HepG2 (cell line): ENCODE measurements at regions of chr4 and their contacts with region 1.

Region 1: GRCh38 chr4:102826890-102827673 is at the start of gene UBE2D3:
- DNase-seq: peak; percentile 81
- ATAC-seq: peak; percentile 64
- H3K4me3 ChIP-seq: peak within 1 kb of the TSS; percentile 92 to 97 (median 95)
- H3K27ac ChIP-seq: peak within 1 kb of the TSS; percentile 97
- H3K4me1 ChIP-seq: peaks cover 42% of the 10 kb centered on the region
- H3K27me3 ChIP-seq: peaks cover 0 to 2% of the 10 kb centered on the region in 2 experiments; a peak in 1 of 5 replicates
- CTCF ChIP-seq: peak; percentile 49
- EP300 ChIP-seq: no peak
- POLR2A ChIP-seq: peak; percentile 60 to 79; a peak in 2 of 4 replicates
- RAD21 ChIP-seq: peak; percentile 58
- total RNA-seq, gene UBE2D3: 224 and 265 TPM in 2 replicates

Region 2: DNA sequence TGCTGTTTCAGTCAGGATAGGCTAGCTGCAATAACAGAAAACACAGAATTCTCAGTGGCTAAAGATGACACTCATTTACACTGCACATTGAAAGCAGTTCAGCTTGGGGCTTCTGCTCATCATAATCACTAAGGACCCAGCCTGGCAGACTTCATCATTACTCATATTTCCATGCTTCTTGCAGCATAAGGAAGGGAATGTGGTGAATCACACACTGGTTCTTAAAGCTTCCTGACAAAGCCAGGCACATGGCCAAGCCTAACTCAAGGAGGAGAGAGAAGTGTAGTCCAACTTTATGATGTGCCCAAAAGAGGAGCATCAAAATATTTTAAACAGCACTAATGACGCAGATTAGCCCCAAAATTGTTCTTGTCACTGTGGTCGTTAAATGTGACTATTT is 850.0 kb before region 1 on chr4:
- CTCF ChIA-PET with region 1: no interaction called
- POLR2A ChIA-PET with region 1: no interaction called
- in situ Hi-C with region 1: no loop called
- intact Hi-C with region 1: no loop called
- DNase-seq: no peak
- ATAC-seq: no peak
- H3K4me3 ChIP-seq: no peak overlapping the region
- H3K27ac ChIP-seq: no peak overlapping the region
- H3K4me1 ChIP-seq: no peaks in the 10 kb centered on the region
- H3K27me3 ChIP-seq: no peaks in the 10 kb centered on the region
- CTCF ChIP-seq: no peak
- EP300 ChIP-seq: no peak
- POLR2A ChIP-seq: no peak
- RAD21 ChIP-seq: no peak

Region 3: DNA sequence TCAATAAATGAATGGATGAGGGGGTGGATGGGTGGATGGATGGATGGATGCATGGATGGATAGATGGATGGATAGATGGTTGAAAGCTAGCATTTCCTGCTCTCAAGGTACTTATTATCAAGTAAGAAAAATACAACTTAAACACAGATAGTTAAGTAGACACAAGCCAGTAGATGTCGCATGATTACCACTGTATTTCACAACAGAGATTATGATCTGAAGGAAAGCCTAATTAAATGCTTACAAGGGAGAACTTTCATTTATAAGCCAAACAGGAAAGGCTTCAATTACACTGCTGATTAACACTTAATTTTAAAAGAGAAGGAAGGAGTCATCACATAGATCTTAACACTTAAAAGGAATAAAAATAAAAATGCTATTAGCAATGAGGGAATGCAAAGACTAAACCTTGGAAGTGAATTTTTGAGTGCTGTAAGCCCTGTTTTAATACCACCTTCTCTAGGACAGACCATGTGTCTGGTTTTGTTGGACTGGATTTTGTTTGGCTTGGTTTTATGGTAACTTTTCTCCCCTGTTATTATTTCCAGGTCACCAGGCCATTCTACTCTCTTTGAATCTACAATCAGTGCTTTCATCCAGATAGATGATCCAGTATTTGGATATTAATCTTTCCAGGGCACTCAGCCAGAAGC is 406.4 kb before region 1 on chr4:
- CTCF ChIA-PET with region 1: no interaction called
- POLR2A ChIA-PET with region 1: no interaction called
- in situ Hi-C with region 1: no loop called
- intact Hi-C with region 1: no loop called
- DNase-seq: peak; percentile 7
- ATAC-seq: no peak
- H3K4me3 ChIP-seq: no peak overlapping the region
- H3K27ac ChIP-seq: no peak overlapping the region
- H3K4me1 ChIP-seq: no peaks in the 10 kb centered on the region
- H3K27me3 ChIP-seq: no peaks in the 10 kb centered on the region
- CTCF ChIP-seq: peak; percentile 31; the same call in 1 of the 2 replicates
- EP300 ChIP-seq: no peak
- POLR2A ChIP-seq: no peak
- RAD21 ChIP-seq: no peak

Region 4: DNA sequence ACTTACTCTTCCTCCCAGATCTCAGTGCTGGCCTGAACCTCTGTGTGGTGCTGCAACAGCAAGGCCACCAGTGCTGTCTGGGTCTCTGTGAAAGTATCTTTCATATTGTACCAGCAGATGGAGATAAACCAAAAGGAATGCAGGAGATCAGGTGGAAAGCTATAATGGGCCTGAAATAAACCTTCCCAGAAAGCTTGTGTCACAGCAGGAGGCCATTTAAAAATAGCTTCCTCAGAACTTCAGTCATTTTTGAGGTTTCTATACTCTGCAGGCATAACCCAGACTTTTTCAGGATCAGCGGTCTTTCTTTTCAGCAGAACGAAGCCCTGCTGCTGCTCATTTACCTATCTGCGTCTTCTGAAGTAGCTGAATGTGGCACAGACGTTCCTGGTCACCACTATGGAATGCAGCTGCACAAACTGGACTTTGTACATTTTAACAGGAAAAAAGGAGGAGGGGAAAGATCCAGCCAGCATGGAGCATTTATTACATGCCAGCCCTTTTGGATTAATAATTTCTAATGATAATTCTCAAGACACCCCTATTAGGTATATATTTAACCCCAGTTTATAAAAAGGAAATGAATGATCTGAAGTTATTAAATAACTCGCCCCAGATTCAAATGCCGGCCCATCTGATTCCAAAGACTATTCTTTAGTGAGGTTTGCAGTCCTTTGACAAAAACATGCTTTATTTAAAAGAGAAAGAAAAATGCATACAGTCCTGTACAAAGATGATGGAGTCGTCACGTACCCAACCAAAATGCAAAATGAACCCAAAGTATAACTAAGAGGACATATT is 206.2 kb before region 1 on chr4:
- CTCF ChIA-PET with region 1: no interaction called
- POLR2A ChIA-PET with region 1: interaction called, 23 read pairs
- in situ Hi-C with region 1: no loop called
- intact Hi-C with region 1: loop called (anchors 1 kb)
- DNase-seq: peak; percentile 92
- ATAC-seq: peak; percentile 93
- H3K4me3 ChIP-seq: peak overlapping the region; percentile 42 to 60 (median 49); a peak in 4 of 6 replicates
- H3K27ac ChIP-seq: peak overlapping the region; percentile 88
- H3K4me1 ChIP-seq: peaks cover 59% of the 10 kb centered on the region
- H3K27me3 ChIP-seq: no peaks in the 10 kb centered on the region
- CTCF ChIP-seq: peak; percentile 87
- EP300 ChIP-seq: peak in 1 of 2 experiments; percentile 54; a peak in 1 of 4 replicates
- POLR2A ChIP-seq: peak; percentile 42 to 79; a peak in 3 of 4 replicates
- RAD21 ChIP-seq: peak; percentile 76

Region 5: DNA sequence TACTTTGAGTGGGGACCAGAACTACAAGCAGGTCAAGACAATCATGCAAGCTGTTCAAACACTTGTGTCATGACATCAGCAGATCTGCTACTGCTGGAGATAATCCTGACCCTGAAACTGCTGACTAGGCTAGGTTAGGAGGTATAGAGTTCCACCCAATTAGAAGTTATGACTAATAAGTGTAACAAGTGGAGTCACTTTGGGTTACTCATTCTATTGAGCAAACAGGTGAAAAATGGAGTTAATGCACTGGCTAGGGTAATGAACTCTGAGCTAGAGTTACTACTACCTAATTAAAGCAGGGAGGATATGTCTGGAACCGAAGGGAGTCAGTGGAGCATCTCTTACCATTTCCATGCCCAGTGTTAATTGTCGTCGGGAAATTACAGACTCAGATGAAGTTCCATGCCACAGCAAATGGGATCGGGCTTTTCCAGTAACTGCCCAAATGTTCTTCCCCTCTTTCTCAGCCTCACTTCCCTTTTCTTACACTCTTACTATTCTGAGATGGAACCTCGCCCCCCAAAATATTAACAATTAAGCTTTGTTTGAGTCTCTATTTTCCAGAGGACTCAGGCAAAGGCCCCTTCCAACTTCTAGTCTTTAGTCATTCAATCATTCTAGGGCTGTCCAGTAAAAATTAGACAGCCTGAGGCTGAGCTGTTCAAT is 46.5 kb before region 1 on chr4:
- CTCF ChIA-PET with region 1: no interaction called
- POLR2A ChIA-PET with region 1: interaction called, 16 read pairs
- in situ Hi-C with region 1: no loop called
- intact Hi-C with region 1: no loop called
- DNase-seq: peak; percentile 57
- ATAC-seq: peak; percentile 13; the same call in 2 of the 3 replicates
- H3K4me3 ChIP-seq: no peak overlapping the region
- H3K27ac ChIP-seq: no peak overlapping the region
- H3K4me1 ChIP-seq: peaks cover 49% of the 10 kb centered on the region
- H3K27me3 ChIP-seq: no peaks in the 10 kb centered on the region
- CTCF ChIP-seq: no peak
- EP300 ChIP-seq: no peak; a peak in 1 of 4 replicates
- POLR2A ChIP-seq: no peak
- RAD21 ChIP-seq: no peak

Region 6: DNA sequence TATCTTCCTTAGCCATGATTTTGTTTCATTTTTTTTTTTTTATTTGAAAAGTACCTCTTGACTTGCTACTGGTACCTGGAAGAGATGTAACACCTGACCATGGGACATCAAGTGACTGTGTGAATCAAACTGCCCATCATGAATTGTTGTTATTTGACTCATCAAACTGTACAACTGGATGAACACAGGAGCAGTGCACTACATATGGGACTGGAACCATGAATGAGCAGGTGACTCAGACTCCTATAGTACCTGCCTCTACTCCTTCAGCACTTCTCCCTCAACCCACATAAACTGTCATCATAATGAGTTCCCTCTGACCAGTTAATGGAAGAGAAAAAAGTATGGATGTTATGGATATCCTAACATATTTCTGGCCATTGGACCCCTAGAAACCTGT is 16.2 kb after region 1 on chr4:
- CTCF ChIA-PET with region 1: no interaction called
- POLR2A ChIA-PET with region 1: interaction called, 13 read pairs
- in situ Hi-C with region 1: no loop called
- intact Hi-C with region 1: no loop called
- DNase-seq: no peak
- ATAC-seq: no peak
- H3K4me3 ChIP-seq: no peak overlapping the region
- H3K27ac ChIP-seq: no peak overlapping the region
- H3K4me1 ChIP-seq: no peaks in the 10 kb centered on the region
- H3K27me3 ChIP-seq: no peaks in the 10 kb centered on the region
- CTCF ChIP-seq: no peak
- EP300 ChIP-seq: no peak
- POLR2A ChIP-seq: no peak
- RAD21 ChIP-seq: no peak

Region 7: GRCh38 chr4:102878901-102879300 is 51.8 kb after region 1 on chr4:
- CTCF ChIA-PET with region 1: no interaction called
- POLR2A ChIA-PET with region 1: interaction called, 19 read pairs
- in situ Hi-C with region 1: no loop called
- intact Hi-C with region 1: loop called (anchors 2 kb)
- DNase-seq: no peak
- ATAC-seq: peak; percentile 34
- H3K4me3 ChIP-seq: no peak overlapping the region
- H3K27ac ChIP-seq: peak overlapping the region; percentile 65
- H3K4me1 ChIP-seq: peaks cover 34% of the 10 kb centered on the region
- H3K27me3 ChIP-seq: no peaks in the 10 kb centered on the region
- CTCF ChIP-seq: no peak
- EP300 ChIP-seq: no peak
- POLR2A ChIP-seq: no peak
- RAD21 ChIP-seq: no peak

Region 8: GRCh38 chr4:103099691-103100392 is 272.8 kb after region 1 on chr4 and contains the start of gene BDH2:
- CTCF ChIA-PET with region 1: no interaction called
- POLR2A ChIA-PET with region 1: interaction called, 10 read pairs
- in situ Hi-C with region 1: no loop called
- intact Hi-C with region 1: no loop called
- DNase-seq: peak; percentile 85
- ATAC-seq: peak; percentile 87
- H3K4me3 ChIP-seq: peak within 1 kb of the TSS; percentile 52 to 70 (median 66)
- H3K27ac ChIP-seq: no peak within 1 kb of the TSS
- H3K4me1 ChIP-seq: peaks cover 47% of the 10 kb centered on the region
- H3K27me3 ChIP-seq: no peaks in the 10 kb centered on the region
- CTCF ChIP-seq: peak; percentile 90
- EP300 ChIP-seq: 0 out of 4 replicates have a peak, but pooled peaks of 1 of the 2 experiments have one; percentile 5
- POLR2A ChIP-seq: no peak
- RAD21 ChIP-seq: peak; percentile 72
- total RNA-seq, gene BDH2: 46.2 and 61.0 TPM in 2 replicates